ENCODE measurements at regions of chr19 and their contacts with region 1.

Region 1: DNA sequence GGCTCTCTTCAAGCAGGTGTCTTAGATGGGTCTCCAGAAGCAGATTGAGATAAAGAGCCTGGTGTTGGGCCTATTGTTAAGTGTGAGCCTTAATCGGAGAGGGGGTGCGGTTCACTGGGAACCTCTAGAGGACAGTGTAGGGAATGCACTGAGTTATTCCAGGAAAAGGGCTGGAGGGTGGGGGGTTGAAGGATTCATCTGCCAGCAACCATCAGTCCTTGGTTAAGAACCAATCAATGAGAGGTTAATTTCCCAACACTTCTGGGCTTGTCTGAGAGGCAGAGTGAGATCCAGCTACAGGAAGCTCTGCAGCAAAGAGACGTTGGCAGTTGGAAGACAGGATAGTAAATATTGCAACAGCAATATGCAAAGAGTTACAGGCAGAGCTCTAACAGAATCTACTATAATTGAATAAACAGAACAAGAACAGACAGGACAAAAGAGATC is 28.7 kb downstream of the CYP4F2 start:
- DNase-seq: peak; percentile 56
- H3K4me3 Mint-ChIP-seq: no peak overlapping the region
- H3K27ac Mint-ChIP-seq: no peak overlapping the region
- H3K4me1 Mint-ChIP-seq: peaks cover 3% of the 10 kb centered on the region
- H3K27me3 Mint-ChIP-seq: peaks cover 7% of the 10 kb centered on the region

Region 2: DNA sequence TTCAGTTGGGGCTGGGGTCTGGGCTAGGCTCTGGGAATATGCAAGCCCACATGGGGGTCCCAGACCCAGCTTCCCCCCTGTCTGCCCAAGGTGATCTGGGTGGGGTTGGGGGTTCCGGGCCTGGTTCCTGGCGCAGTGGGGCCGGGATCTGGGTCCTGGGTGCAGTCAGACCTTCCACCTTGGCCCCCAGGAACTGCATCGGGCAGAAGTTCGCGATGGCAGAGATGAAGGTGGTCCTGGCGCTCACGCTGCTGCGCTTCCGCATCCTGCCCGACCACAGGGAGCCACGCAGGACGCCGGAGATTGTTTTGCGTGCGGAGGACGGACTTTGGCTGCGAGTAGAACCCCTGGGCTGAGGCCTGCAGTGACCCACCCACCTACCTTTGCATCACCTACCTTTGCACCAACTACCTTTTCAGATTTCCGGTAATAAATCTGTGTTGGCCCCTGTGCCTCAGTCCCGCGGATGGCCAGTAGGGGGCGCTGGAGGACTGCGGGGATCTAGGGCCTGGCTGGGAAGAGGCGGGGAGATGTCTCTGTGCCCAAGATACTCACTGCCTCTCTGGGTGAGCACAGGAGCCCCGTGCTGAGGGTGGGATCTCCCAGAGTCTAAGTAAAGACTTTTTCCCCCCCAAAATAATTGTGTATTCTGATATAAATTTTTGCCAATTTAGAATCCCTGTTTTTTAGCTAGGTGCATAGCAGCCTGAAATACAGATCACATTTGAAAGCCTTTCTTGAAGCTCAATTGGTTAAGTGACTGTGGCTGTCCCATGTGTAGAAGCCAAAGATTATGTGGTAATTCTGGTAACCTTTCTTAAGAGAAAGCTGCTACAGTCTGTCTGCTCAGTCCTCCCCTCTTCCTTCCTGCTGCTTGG is 239.9 kb before region 1 on chr19:
- CTCF ChIA-PET with region 1: interaction called, 11 read pairs
- intact Hi-C with region 1: loop called (anchors 1 kb)
- DNase-seq: peak; percentile 93
- H3K4me3 Mint-ChIP-seq: no peak overlapping the region
- H3K27ac Mint-ChIP-seq: no peak overlapping the region
- H3K4me1 Mint-ChIP-seq: no peaks in the 10 kb centered on the region
- H3K27me3 Mint-ChIP-seq: peaks cover 6% of the 10 kb centered on the region

Region 3: DNA sequence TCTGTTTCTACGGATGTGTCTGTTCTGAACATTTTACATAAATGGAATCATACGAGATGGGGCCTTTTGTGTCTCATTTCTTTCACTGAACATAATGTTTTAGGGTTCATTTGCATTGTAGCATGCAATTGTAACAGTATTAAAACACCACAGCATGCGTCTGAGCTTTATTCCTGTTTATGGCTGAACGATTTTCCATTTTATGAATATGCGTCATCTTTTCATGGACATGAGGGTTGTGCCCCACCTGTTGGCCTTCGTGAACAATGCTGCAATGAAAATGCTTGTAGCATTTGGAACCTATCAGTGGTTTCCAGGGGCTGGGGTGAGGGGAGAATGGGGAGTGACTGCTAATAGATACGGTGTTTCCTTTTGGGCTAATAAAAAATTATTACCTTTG is 58.8 kb before region 1 on chr19:
- CTCF ChIA-PET with region 1: interaction called, 4 read pairs
- intact Hi-C with region 1: loop called (anchors 5 kb)
- DNase-seq: no peak
- H3K4me3 Mint-ChIP-seq: no peak overlapping the region
- H3K27ac Mint-ChIP-seq: no peak overlapping the region
- H3K4me1 Mint-ChIP-seq: peaks cover 2% of the 10 kb centered on the region
- H3K27me3 Mint-ChIP-seq: peaks cover 6% of the 10 kb centered on the region